Sciatic nerve (tissue), 2 donors: ENCODE measurements at regions of chr16 and their contacts with region 1.

Region 1: DNA sequence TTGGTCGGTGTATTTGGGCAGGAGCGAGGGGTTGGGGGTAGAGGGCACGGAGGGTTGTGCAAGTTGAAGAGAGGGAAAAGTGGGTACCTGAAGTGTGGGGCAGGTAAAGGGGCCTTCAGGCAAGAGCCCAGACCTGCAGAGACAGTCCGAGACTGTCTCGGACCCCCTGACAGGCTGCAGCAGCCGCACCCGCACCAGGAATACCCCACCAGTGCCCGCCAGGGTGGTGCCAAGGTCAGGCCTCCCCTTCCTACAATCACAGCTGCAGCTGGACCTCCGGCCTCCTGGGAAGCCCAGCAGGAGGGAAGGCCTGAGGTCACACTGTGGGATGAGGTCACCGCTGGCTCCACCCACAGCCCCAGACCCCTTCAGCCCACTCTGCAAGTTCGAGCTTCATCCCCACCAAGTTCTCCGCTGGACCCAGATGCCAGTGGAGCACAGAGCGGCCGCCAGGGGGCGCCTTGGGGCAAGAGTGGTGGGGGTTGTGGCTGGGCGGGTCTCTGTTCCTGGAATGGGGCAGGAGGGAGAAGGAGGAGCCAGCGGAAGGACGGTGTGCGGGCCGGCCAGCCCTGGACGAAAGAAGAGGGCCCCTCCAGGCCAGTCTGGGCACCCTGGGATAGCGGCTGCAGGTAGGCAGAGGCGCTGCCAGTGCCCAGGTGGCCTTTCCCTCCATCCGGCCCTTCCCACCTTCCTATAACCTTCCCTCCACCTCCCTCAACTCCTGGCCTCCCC is at the start of gene HSD3B7:
- DNase-seq: peak; percentile 96
- ATAC-seq: peak; percentile 93
- total RNA-seq, gene HSD3B7: 16.3 TPM

Region 2: GRCh38 chr16:30698139-30698815 is 286.6 kb before region 1 on chr16:
- intact Hi-C with region 1: no loop called
- DNase-seq: peak; percentile 100
- ATAC-seq: peak; percentile 93

Region 3: GRCh38 chr16:31094424-31095120 is 109.7 kb after region 1 on chr16 and contains the start of gene VKORC1:
- intact Hi-C with region 1: loop called (anchors 10 kb)
- DNase-seq: peak; percentile 95
- ATAC-seq: peak; percentile 97
- total RNA-seq, gene VKORC1: 65.0 TPM

Region 4: GRCh38 chr16:31440516-31441184 is 455.8 kb after region 1 on chr16:
- intact Hi-C with region 1: loop called (anchors 10 kb)
- DNase-seq: no peak
- ATAC-seq: no peak

Region 5: GRCh38 chr16:31868691-31869167 is 883.9 kb after region 1 on chr16:
- intact Hi-C with region 1: loop called (anchors 10 kb)
- DNase-seq: peak; percentile 92
- ATAC-seq: peak; percentile 77